A673 (cell line): ENCODE measurements at regions of chr3 and their contacts with region 1.

Region 1: DNA sequence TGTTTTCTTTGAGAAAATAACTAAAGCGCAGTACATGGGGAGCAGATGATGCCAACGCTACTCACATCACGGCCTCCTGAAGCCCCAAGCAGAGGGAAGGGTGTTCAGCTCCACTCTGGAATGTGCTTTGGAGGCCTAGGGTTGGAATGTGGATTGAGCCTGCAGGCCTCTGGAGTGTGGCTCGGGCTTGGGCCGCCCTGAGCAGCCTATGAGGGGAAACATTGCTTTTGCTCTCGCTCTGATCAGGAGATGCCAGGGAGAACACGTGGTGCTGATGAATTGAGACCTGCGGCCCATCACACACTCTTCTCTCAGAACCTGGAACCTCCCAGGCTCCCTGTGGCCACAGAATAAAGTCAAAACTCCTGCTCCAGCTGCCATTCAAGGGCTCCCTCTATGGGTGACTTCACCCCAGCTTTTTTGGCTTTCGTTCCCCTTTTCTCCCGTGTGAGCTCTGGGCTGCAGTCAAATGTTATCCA is 23.3 kb downstream of the CCDC13 start:
- DNase-seq: no peak
- H3K4me3 ChIP-seq: no peak overlapping the region
- H3K27ac ChIP-seq: no peak overlapping the region
- H3K4me1 ChIP-seq: peaks cover 6% of the 10 kb centered on the region
- H3K27me3 ChIP-seq: no peaks in the 10 kb centered on the region
- CTCF ChIP-seq: peak; percentile 40

Region 2: DNA sequence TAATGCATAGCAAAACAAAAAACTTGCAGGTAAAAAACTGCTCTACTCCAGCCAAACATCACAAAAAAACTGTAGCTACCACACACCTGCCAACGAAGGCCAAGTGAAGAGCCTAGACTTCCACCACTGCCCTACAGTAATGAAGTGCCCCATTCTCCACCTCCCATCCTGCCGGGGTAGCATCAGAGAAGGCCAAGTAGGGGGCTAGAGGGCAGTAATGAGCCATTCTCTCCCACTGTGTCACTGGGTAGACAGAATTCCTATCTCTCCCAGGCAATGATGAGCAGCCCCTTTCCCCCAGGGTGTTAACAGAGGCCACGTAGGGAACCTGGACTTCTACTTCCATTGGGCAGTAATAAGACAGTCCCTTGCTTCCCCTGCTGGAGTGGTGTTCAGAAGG is 177.5 kb before region 1 on chr3:
- CTCF ChIA-PET with region 1: no interaction called
- POLR2A ChIA-PET with region 1: no interaction called
- intact Hi-C with region 1: loop called (anchors 10 kb)
- DNase-seq: peak; percentile 24
- H3K4me3 ChIP-seq: no peak overlapping the region
- H3K27ac ChIP-seq: no peak overlapping the region
- H3K4me1 ChIP-seq: no peaks in the 10 kb centered on the region
- H3K27me3 ChIP-seq: no peaks in the 10 kb centered on the region
- CTCF ChIP-seq: peak; percentile 39; the same call in 1 of the 2 replicates

Region 3: DNA sequence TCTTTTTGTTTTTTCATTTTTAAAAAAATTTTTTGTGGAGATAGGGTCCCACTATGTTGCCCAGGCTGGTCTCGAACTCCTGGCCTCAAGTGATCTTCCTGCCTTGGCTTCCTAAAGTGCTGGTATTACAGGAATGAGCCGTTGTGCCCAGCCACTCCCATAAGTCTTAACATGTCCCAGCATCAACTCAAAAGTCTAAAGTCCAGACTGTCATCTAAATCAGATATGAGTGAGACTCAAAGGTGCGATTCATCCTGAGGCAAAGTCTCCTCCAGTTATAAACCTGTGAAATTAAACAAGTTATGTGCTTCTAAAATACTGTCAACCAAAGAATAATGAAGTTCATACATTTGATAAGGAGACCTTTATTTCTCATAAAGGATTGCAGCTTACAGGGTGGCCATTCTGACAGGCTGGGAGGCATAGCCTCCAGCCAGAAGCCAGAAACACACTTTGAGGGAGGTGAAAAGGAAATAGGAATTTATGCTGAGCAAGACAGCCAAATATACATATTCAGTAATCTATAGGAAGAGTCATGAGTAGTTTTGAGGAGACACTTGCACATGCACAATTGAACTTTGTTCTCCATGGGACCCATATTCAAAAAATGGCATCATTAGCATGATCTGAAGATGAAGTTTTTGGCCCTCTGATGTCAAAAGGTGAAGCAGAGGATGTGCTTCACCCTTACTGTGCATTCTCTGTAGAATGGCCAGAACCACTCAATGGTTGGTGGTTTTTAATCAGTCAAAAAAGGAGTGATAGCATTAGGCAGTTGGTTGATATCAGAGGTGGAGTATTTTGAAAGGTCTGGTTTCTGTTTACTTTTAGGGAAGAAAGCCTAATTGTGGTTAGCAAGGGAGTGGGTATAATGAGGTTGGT is 145.1 kb after region 1 on chr3:
- CTCF ChIA-PET with region 1: no interaction called
- POLR2A ChIA-PET with region 1: no interaction called
- intact Hi-C with region 1: no loop called
- DNase-seq: no peak
- H3K4me3 ChIP-seq: no peak overlapping the region
- H3K27ac ChIP-seq: no peak overlapping the region
- H3K4me1 ChIP-seq: no peaks in the 10 kb centered on the region
- H3K27me3 ChIP-seq: no peaks in the 10 kb centered on the region
- CTCF ChIP-seq: no peak